Dorsolateral prefrontal cortex (tissue), 120 donors: ENCODE measurements at regions of chr2 and their contacts with region 1.

Region 1: DNA sequence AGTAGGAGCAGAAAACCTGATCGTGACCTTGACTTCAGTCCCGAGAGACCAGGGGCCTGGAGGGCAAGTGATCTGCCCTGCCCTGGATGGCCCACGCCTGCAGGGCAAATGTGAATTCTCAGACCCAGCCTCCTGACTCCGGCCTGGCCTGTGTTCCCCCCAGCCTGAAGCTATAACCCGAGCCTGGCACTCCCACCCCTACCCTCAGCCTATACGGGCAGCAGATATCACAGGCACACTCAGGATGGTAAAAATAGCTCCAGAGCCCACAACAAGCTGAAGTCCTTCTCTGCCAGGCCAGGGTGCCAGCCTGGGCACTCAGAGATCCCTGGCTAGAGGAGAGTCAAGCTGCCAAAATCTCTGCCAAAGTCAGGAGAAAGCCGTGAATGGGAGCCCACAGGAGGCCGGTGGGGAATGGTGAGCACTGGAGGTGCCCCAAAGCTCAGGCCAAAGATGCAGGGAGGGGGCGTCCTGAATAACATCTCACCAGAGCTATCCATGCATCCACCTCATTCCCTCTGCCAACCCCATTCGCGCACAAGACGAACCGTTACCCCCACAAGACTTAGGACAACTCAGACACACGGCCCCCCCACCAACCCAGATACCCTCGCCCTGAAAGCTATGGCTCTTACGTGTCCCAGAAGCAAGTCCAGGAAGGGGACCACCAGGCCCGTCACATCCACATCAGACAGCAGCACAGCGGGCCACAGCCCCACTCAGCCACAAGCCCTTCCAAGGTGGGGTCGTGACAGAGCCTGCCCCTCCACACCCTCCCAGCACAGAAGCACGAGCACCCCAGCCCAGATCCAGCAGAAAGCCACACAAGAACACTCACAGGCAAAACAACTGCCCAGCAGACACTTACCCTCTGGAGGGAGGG is 144.9 kb downstream of the TNS1 start:
- DNase-seq: no peak
- H3K4me3 ChIP-seq: peak overlapping the region in 56 of 59 donors; percentile 4 to 66 (median 42)
- H3K27ac ChIP-seq: peak overlapping the region in 38 of 59 donors; percentile 1 to 84 (median 46)
- H3K27me3 ChIP-seq: no peaks in the 10 kb centered on the region
- CTCF ChIP-seq: no peak

Region 2: GRCh38 chr2:217836901-217837491 is 20.9 kb before region 1 on chr2:
- intact Hi-C with region 1: loop called in 1 of 2 experiments (anchors 2 kb)
- DNase-seq: peak in 9 of 10 donors; percentile 68 to 89 (median 78)
- H3K4me3 ChIP-seq: peak overlapping the region in 2 of 59 donors; percentile 3 to 17
- H3K27ac ChIP-seq: peak overlapping the region in 49 of 59 donors; percentile 9 to 92 (median 69)
- H3K27me3 ChIP-seq: no peaks in the 10 kb centered on the region
- CTCF ChIP-seq: peak in 48 of 56 donors; percentile 12 to 66 (median 38)

Region 3: GRCh38 chr2:217890445-217890844 is 32.6 kb after region 1 on chr2:
- intact Hi-C with region 1: no loop called
- DNase-seq: peak in 2 of 10 donors; percentile 44 to 59
- H3K4me3 ChIP-seq: no peak overlapping the region
- H3K27ac ChIP-seq: peak overlapping the region in 10 of 59 donors; percentile 8 to 58 (median 40)
- H3K27me3 ChIP-seq: no peaks in the 10 kb centered on the region
- CTCF ChIP-seq: peak in 52 of 56 donors; percentile 15 to 70 (median 44)

Region 4: DNA sequence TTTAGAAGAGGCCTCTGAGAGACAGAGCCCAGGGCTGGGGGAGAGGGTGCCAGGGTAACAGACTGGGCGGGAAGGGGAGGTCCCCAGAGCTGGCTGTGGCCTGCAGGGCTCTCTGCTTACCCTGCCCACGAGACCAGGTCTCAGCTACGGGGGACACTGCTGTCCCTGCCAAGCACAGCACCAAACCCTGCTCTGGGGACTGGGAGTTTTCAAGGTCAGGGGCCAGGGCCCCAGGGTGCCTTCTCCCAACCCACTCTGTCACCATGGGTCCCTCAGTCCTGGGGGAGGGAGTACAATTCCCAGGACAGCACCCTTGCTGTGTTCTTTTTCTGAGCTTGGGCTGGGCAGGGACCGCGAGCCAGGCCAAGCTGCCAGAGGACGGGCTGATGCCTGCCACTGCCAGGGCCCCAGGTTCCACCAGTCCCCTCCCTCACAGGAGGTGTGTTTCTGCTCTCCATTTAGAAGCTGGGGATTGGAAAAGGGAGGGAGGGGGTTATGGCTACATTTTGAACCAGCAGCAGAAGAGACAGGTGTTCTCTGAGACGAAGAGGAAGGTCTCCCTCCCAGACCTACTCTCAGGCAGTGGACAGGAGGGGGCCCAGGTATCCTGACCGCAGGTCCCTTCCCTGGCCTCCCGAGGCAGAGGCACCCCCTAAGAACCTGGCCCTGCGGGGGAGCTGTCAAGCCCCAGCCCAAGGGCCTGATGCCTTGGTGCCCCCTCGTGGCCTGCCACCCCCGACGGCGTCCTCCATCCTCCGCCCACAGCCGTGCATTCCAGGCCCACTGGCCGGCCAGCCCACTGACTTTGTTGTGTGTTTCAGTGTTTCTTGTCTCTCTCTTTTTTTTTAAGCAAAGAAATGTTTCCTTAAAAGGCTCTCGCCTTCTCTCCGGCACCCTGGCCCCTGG is 64.5 kb after region 1 on chr2:
- intact Hi-C with region 1: no loop called
- DNase-seq: no peak
- H3K4me3 ChIP-seq: no peak overlapping the region
- H3K27ac ChIP-seq: peak overlapping the region in 51 of 59 donors; percentile 21 to 84 (median 64)
- H3K27me3 ChIP-seq: no peaks in the 10 kb centered on the region
- CTCF ChIP-seq: peak in 48 of 56 donors; percentile 13 to 65 (median 40)

Region 5: GRCh38 chr2:217964275-217965161 is 106.7 kb after region 1 on chr2:
- intact Hi-C with region 1: no loop called
- DNase-seq: peak in 3 of 10 donors; percentile 14 to 39 (median 20)
- H3K4me3 ChIP-seq: no peak overlapping the region
- H3K27ac ChIP-seq: peak overlapping the region in 5 of 59 donors; percentile 6 to 62 (median 23)
- H3K27me3 ChIP-seq: no peaks in the 10 kb centered on the region
- CTCF ChIP-seq: no peak

Region 6: GRCh38 chr2:218438601-218438995 is 580.7 kb after region 1 on chr2:
- intact Hi-C with region 1: no loop called
- DNase-seq: peak in 2 of 10 donors; percentile 22 to 38
- H3K4me3 ChIP-seq: no peak overlapping the region
- H3K27ac ChIP-seq: peak overlapping the region in 1 of 59 donors; percentile 15
- H3K27me3 ChIP-seq: no peaks in the 10 kb centered on the region
- CTCF ChIP-seq: no peak